ENCODE measurements at regions of chr4 and their contacts with region 1.

Region 1: GRCh38 chr4:4334798-4335520 is 44.9 kb downstream of the ZBTB49 start:
- DNase-seq: peak; percentile 32
- H3K4me3 ChIP-seq: no peak overlapping the region
- H3K27ac ChIP-seq: no peak overlapping the region
- H3K4me1 ChIP-seq: no peaks in the 10 kb centered on the region
- H3K27me3 ChIP-seq: no peaks in the 10 kb centered on the region
- CTCF ChIP-seq: peak; percentile 14 to 56 (median 40)
- EP300 ChIP-seq: no peak
- POLR2A ChIP-seq: no peak

Region 2: DNA sequence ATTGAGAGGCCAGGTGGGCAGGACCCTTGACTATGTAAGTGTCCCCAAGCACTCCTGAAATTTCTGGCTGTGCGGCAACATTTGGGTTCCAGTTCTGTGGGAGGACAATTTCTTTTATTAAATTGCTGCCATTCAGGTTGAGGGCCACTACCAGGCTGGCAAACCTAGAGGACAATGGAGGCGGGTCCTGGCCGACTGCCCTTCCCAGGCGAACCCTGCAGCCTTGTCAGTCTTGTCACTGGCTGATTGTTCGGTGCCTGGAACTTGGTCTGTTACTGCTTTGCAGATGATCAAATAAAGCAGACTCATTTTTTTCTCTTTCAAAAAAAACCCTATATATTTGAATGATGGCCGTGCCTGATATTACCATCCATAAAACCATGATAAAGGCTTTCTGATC is 80.3 kb before region 1 on chr4:
- intact Hi-C with region 1: loop called (anchors 5 kb)
- DNase-seq: no peak
- H3K4me3 ChIP-seq: no peak overlapping the region
- H3K27ac ChIP-seq: no peak overlapping the region
- H3K4me1 ChIP-seq: no peaks in the 10 kb centered on the region
- H3K27me3 ChIP-seq: peaks cover 0 to 3% (median 0%) of the 10 kb centered on the region in 3 donors
- CTCF ChIP-seq: no peak
- EP300 ChIP-seq: no peak
- POLR2A ChIP-seq: no peak

Region 3: DNA sequence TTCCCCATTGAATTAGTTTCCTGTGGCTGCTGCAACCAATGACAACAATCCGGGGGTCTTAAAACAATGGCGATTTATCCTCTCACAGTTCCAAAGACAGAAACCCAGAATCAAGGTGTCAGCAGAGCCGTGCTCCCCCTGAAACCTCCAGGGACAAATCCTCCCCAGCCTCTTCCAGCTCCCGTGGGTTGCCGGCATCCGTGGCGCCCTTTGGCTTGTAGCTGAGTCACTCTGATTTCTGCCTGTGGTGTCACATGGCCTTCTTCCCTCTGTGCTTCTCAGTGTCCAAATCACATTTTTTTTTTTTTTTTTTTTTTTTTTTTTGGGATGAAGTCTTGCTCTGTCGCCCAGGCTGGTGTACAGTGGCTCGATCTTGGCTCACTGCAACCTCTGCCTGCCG is 271.4 kb after region 1 on chr4:
- intact Hi-C with region 1: no loop called
- DNase-seq: no peak
- H3K4me3 ChIP-seq: no peak overlapping the region
- H3K27ac ChIP-seq: no peak overlapping the region
- H3K4me1 ChIP-seq: no peaks in the 10 kb centered on the region
- H3K27me3 ChIP-seq: no peaks in the 10 kb centered on the region
- CTCF ChIP-seq: no peak
- EP300 ChIP-seq: no peak
- POLR2A ChIP-seq: no peak